ENCODE measurements at regions of chr7 and their contacts with region 1.

Region 1: GRCh38 chr7:136605532-136606329 is 262.7 kb upstream of the CHRM2 start:
- DNase-seq: no peak
- ATAC-seq: no peak
- H3K4me3 ChIP-seq: no peak overlapping the region
- H3K4me3 Mint-ChIP-seq: no peak overlapping the region
- H3K27ac ChIP-seq: no peak overlapping the region
- H3K27ac Mint-ChIP-seq: no peak overlapping the region
- H3K4me1 ChIP-seq: no peaks in the 10 kb centered on the region
- H3K4me1 Mint-ChIP-seq: no peaks in the 10 kb centered on the region
- H3K27me3 ChIP-seq: no peaks in the 10 kb centered on the region
- H3K27me3 Mint-ChIP-seq: no peaks in the 10 kb centered on the region

Region 2: DNA sequence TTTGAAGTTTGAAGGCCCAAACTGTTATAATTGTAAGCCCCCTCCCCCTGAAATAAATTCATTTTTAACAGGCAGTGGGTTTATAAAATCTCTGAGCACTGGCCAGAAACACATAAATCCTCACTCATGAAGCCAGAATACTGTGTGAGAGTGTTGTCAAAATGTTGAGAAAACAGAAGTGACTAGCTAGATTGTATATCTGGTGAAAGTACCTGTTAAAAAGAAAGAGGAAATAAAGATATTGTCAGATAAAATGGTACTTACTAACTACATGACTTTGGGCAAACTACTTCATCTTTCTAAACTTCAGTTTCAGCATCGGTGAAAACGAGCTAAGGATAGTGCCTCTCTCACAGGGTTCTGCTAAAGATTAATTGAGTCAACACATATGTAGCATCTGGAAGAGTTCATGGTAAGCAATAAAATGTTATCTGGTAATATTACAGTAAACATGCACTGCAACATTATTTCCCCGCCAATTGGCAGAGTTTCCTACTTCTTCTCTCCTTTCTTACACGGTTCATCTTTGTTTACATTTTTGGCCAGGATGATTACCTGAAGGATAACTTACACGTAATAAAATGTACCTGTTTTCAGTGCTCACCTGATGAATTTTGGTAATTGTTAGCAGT is 60.3 kb after region 1 on chr7:
- CTCF ChIA-PET with region 1: no interaction called
- POLR2A ChIA-PET with region 1: no interaction called
- intact Hi-C with region 1: loop called in 1 of 2 experiments (anchors 10 kb)
- DNase-seq: no peak
- ATAC-seq: no peak
- H3K4me3 ChIP-seq: no peak overlapping the region
- H3K4me3 Mint-ChIP-seq: no peak overlapping the region
- H3K27ac ChIP-seq: no peak overlapping the region
- H3K27ac Mint-ChIP-seq: no peak overlapping the region
- H3K4me1 ChIP-seq: no peaks in the 10 kb centered on the region
- H3K4me1 Mint-ChIP-seq: no peaks in the 10 kb centered on the region
- H3K27me3 ChIP-seq: no peaks in the 10 kb centered on the region
- H3K27me3 Mint-ChIP-seq: no peaks in the 10 kb centered on the region